ENCODE measurements at regions of chrX and their contacts with region 1.

Region 1: DNA sequence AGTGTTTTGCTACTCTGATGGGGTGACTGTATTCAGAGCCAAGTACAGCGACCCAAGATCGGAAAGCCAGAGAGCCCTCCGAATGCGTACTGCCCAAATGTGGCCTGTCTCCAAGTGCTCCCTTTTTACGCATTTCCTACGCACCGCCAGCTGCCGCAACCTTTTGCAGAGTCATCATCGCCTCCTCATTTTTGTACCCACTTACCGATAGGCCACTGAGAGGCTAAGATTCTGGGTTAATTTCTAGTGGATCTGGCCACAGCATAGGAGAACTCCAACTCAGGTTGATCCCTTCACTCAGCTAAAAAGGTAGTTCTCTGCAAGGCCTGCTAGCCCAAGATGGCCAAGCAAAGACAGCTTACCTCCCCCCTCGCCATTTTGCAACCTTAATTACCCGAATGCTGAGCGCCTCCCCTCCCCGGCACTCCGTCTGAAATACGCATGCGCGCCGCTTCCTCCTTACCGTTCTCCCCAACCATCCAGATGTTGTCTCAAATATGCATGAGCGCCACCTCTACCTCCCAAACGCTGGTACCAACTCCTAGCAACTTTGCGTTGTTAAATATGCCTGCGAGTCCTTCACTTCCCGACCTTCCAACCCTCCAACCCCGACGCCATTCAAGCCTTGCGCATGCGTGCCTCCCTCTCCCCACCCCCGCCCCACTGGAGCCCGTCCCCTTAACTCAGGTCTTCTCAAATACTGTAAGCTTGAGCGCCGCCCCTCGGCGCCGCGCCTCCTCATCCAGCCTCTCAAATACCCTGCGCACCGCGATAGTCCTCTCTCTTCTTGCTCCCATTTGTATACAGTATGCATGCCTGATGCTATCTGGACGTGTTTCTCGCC is 11.8 kb upstream of the ZCCHC13 start:
- DNase-seq: peak; percentile 85
- H3K4me3 Mint-ChIP-seq: peak overlapping the region; percentile 94
- H3K27ac Mint-ChIP-seq: peak overlapping the region; percentile 98
- H3K4me1 Mint-ChIP-seq: peaks cover 18% of the 10 kb centered on the region
- H3K27me3 Mint-ChIP-seq: no peaks in the 10 kb centered on the region

Region 2: GRCh38 chrX:73214426-73215094 is 1077.6 kb before region 1 on chrX and contains the start of gene NAP1L2:
- CTCF ChIA-PET with region 1: no interaction called
- intact Hi-C with region 1: loop called (anchors 2 kb)
- DNase-seq: peak; percentile 59
- H3K4me3 Mint-ChIP-seq: peak within 1 kb of the TSS; percentile 91
- H3K27ac Mint-ChIP-seq: peak within 1 kb of the TSS; percentile 91
- H3K4me1 Mint-ChIP-seq: peaks cover 19% of the 10 kb centered on the region
- H3K27me3 Mint-ChIP-seq: peaks cover 3% of the 10 kb centered on the region
- total RNA-seq, gene NAP1L2: 2.5 to 2.7 TPM

Region 3: DNA sequence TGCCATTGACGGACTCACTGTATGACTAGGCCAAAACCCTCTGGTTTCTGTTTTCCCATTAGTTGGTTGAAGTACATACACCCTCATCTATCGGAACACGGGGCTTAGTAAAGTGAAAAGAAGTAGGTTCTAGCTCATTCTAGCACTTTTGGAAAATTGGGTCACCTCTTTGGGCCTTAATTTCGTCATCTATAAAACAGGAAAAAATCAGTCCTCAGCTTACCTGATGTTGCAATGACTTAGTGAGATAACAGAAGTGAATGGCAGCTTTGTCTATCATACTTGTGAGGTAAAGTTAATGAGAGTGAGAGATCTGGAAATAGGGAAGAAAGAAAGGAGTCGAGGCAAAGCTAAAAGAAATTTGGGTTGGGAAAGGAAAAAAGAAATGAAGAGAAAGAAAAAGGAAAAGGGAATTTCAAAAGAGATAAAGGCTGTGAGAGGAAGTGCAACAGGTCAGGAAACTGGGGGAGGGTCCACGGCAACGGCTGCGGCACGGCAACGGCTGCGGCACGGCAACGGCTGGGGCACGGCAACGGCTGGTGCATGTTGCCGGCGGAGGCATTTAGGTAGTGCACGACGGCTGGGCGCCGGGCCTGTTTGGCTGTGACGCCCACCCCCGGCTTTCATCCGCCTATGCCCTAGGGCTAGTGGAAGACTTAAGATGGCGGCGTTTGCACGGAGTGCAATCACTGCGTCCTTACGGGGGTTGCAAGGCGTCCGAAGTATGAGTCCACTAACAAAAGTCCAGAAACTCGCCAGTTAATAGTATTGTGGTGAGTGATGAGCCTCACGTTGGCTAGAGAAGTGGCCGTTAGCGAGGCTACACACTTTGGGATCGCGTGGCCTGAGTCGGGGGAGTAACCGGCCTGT is 348.3 kb before region 1 on chrX:
- CTCF ChIA-PET with region 1: no interaction called
- intact Hi-C with region 1: loop called (anchors 1 kb)
- DNase-seq: peak; percentile 87
- H3K4me3 Mint-ChIP-seq: peak overlapping the region; percentile 94
- H3K27ac Mint-ChIP-seq: peak overlapping the region; percentile 95
- H3K4me1 Mint-ChIP-seq: peaks cover 21% of the 10 kb centered on the region
- H3K27me3 Mint-ChIP-seq: no peaks in the 10 kb centered on the region

Region 4: GRCh38 chrX:74218895-74219294 is 73.3 kb before region 1 on chrX:
- CTCF ChIA-PET with region 1: no interaction called
- intact Hi-C with region 1: loop called (anchors 2 kb)
- DNase-seq: no peak
- H3K4me3 Mint-ChIP-seq: no peak overlapping the region
- H3K27ac Mint-ChIP-seq: no peak overlapping the region
- H3K4me1 Mint-ChIP-seq: peaks cover 18% of the 10 kb centered on the region
- H3K27me3 Mint-ChIP-seq: no peaks in the 10 kb centered on the region

Region 5: DNA sequence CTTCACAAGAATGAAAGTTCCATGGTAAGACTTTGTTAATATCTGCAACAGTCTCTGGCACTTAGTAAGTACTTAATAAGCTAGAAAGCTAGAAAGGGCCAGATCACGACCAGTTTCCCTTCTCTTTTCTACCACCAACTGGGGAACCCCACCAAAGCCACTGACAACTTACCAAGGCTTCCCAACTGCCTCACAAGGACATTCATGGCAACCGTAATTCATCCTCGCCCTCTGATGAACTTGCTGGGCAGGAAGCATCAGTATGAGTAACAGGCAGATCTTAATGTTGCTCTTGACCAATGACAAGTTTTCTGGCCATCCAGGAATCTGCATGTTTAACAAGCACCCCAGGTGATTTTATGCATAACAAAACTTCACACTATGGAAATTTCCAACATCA is 11.4 kb before region 1 on chrX:
- CTCF ChIA-PET with region 1: no interaction called
- intact Hi-C with region 1: no loop called
- DNase-seq: no peak
- H3K4me3 Mint-ChIP-seq: no peak overlapping the region
- H3K27ac Mint-ChIP-seq: no peak overlapping the region
- H3K4me1 Mint-ChIP-seq: peaks cover 10% of the 10 kb centered on the region
- H3K27me3 Mint-ChIP-seq: no peaks in the 10 kb centered on the region

Region 6: DNA sequence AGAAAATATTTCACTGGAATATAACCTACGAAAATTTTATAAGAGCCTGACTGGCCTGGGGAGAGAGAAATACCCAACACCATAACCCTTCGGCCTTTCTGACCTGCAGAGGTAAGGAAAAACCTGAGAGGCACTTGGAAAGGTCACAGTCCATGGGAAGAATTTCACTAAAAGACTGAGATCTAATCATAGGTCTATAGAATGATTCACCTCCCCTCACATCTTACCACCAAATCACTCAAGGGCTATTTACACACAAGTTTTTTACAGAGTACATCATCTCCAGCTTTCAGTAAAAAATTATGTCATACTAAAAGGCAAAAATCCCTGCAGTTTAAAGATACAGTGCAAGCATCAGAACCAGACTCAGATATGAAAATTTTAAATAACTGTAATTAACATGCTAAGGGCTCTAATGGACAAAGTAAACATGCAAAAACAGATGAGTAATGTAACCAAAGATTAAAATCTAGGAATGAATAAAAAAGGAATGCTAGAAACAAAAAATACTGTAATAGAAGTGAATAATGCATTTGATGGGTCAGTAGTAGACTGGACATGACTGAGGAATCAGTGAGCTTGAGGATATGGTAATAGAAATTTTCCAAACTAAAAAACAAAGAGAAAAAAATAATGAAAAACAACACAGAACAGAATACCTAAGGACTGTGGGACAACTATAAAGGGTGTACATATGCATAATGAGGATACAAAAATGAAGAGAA is 97.0 kb after region 1 on chrX:
- CTCF ChIA-PET with region 1: no interaction called
- intact Hi-C with region 1: no loop called
- DNase-seq: no peak
- H3K4me3 Mint-ChIP-seq: no peak overlapping the region
- H3K27ac Mint-ChIP-seq: no peak overlapping the region
- H3K4me1 Mint-ChIP-seq: no peaks in the 10 kb centered on the region
- H3K27me3 Mint-ChIP-seq: peaks cover 4% of the 10 kb centered on the region

Region 7: DNA sequence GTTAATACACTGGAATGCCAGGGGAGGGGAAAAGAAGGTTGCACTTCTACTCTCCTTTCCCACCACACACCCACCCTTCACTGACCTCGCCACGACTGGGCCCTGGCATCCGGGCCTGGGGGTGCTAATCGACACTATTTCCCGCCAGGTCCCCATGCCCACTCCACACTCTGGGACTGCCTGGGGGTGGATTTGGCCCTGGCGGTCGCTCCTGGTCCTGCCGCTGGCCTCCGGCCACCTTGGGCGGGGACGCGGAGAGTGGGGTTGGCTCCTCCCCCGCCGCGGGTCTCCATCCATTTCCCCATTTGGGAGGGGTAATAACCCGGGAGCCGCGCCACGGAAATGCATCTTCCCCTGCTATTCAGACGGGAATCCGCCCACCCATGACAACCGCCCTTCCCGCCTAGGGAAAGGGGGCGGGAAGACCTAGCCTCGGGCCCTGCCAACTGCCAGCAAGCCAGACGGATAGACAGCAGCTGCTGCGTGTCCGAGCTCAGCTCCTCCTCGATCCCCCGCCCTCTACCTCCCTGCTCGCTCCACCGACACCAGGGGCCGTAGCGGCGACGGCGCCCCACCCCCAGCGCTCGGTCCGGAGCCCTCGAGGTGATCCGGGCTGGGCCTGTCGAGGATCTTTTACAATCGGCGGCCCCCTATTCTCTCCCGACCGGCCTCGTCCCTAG is 244.1 kb after region 1 on chrX:
- CTCF ChIA-PET with region 1: no interaction called
- intact Hi-C with region 1: loop called (anchors 1 kb)
- DNase-seq: peak; percentile 40
- H3K4me3 Mint-ChIP-seq: peak overlapping the region; percentile 73
- H3K27ac Mint-ChIP-seq: peak overlapping the region; percentile 2
- H3K4me1 Mint-ChIP-seq: peaks cover 20% of the 10 kb centered on the region
- H3K27me3 Mint-ChIP-seq: no peaks in the 10 kb centered on the region

Region 8: GRCh38 chrX:75156021-75156945 is 864.1 kb after region 1 on chrX and contains the start of gene ABCB7:
- CTCF ChIA-PET with region 1: no interaction called
- intact Hi-C with region 1: loop called (anchors 2 kb)
- DNase-seq: peak; percentile 68
- H3K4me3 Mint-ChIP-seq: peak within 1 kb of the TSS; percentile 99
- H3K27ac Mint-ChIP-seq: peak within 1 kb of the TSS; percentile 96
- H3K4me1 Mint-ChIP-seq: peaks cover 45% of the 10 kb centered on the region
- H3K27me3 Mint-ChIP-seq: no peaks in the 10 kb centered on the region
- total RNA-seq, gene ABCB7: 46.8 to 47.6 TPM

Region 9: GRCh38 chrX:76172325-76172893 is 1880.2 kb after region 1 on chrX:
- CTCF ChIA-PET with region 1: no interaction called
- intact Hi-C with region 1: loop called (anchors 2 kb)
- DNase-seq: no peak
- H3K4me3 Mint-ChIP-seq: peak overlapping the region; percentile 92
- H3K27ac Mint-ChIP-seq: peak overlapping the region; percentile 93
- H3K4me1 Mint-ChIP-seq: peaks cover 53% of the 10 kb centered on the region
- H3K27me3 Mint-ChIP-seq: no peaks in the 10 kb centered on the region